ENCODE measurements at regions of chr2 and their contacts with region 1.

Region 1: GRCh38 chr2:179239195-179239594 is 25.4 kb downstream of the SESTD1 start:
- DNase-seq: no peak
- H3K4me3 Mint-ChIP-seq: no peak overlapping the region
- H3K27ac Mint-ChIP-seq: no peak overlapping the region
- H3K4me1 Mint-ChIP-seq: peaks cover 32% of the 10 kb centered on the region
- H3K27me3 Mint-ChIP-seq: no peaks in the 10 kb centered on the region

Region 2: DNA sequence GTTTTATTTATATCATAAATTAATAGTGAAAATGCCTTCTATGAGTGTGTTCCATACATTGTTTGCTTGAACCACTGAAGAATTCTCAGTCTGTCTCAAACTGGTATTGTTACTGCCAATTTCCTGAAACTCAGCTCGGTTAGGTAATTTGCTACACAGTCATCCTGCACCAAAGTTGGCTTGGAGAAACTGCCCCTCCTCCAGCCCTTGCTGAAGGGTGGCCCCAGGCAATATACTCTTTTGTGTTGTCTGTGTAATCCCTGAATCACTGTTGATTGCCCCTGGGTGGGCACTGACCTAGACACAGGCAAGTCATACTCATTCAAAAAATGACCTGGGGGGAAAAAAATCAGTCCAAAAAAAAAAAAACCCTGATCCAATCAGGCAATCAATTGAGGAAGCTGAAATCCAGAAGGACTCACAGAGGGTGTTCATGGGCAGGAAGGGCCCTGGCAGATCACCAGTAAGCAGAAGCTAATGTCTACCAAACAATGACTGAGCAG is 29.2 kb after region 1 on chr2:
- CTCF ChIA-PET with region 1: interaction called, 4 read pairs
- POLR2A ChIA-PET with region 1: no interaction called
- intact Hi-C with region 1: loop called (anchors 1 kb)
- DNase-seq: peak; percentile 60
- H3K4me3 Mint-ChIP-seq: no peak overlapping the region
- H3K27ac Mint-ChIP-seq: no peak overlapping the region
- H3K4me1 Mint-ChIP-seq: peaks cover 16% of the 10 kb centered on the region
- H3K27me3 Mint-ChIP-seq: peaks cover 28% of the 10 kb centered on the region